ENCODE measurements at regions of chr2 and their contacts with region 1.

Region 1: GRCh38 chr2:135052042-135052876 is at the start of gene RAB3GAP1:
- DNase-seq: peak; percentile 85
- H3K4me3 Mint-ChIP-seq: peak within 1 kb of the TSS; percentile 95
- H3K27ac Mint-ChIP-seq: peak within 1 kb of the TSS; percentile 100
- H3K4me1 Mint-ChIP-seq: peaks cover 16% of the 10 kb centered on the region
- H3K27me3 Mint-ChIP-seq: no peaks in the 10 kb centered on the region
- CTCF ChIP-seq: no peak
- total RNA-seq, gene RAB3GAP1: 63.4 and 70.1 TPM in 2 replicates

Region 2: DNA sequence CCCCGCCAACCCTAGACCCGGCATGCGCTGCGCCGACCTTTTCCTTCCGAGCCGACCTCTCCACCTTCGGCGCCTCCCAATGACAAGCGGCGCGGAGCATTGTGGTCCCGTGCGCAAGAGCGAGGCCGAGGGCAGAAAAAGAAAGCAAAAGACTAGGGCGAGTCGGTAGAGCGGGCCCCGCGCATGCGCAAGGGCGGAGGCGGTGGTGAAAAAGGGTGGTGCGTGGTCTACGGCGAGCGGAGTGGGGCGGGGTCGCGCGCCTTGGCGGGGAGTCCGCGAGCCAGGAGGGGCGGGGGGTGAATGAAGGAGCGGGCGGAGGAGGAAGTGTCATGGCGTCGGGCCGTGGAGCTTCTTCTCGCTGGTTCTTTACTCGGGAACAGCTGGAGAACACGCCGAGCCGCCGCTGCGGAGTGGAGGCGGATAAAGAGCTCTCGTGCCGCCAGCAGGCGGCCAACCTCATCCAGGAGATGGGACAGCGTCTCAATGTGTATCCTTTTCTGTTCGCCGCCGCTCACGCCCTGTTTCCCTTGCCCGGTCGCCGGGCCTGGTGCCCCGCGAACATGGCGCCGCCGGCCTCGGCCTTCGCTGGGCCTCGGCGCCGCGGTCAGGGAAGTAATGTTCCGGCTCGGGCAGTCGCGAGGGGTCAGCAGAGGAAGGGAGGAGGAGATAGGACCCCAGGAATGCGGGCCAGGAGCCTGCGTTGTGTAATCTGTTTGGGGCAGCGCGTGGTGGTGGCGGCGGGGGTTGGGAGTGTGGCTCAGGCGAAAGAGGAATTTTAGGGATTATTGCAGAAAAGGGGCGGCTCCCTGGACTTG is 133.5 kb before region 1 on chr2 and contains the start of gene CCNT2:
- CTCF ChIA-PET with region 1: no interaction called
- POLR2A ChIA-PET with region 1: interaction called, 12 read pairs
- intact Hi-C with region 1: no loop called
- DNase-seq: peak; percentile 99
- H3K4me3 Mint-ChIP-seq: peak within 1 kb of the TSS; percentile 100
- H3K27ac Mint-ChIP-seq: peak within 1 kb of the TSS; percentile 100
- H3K4me1 Mint-ChIP-seq: peaks cover 12% of the 10 kb centered on the region
- H3K27me3 Mint-ChIP-seq: no peaks in the 10 kb centered on the region
- CTCF ChIP-seq: no peak
- total RNA-seq, gene CCNT2: 38.8 and 39.3 TPM in 2 replicates

Region 3: GRCh38 chr2:135030826-135031225 is 21.4 kb before region 1 on chr2:
- CTCF ChIA-PET with region 1: no interaction called
- POLR2A ChIA-PET with region 1: interaction called, 10 read pairs
- intact Hi-C with region 1: no loop called
- DNase-seq: peak; percentile 53
- H3K4me3 Mint-ChIP-seq: no peak overlapping the region
- H3K27ac Mint-ChIP-seq: no peak overlapping the region
- H3K4me1 Mint-ChIP-seq: no peaks in the 10 kb centered on the region
- H3K27me3 Mint-ChIP-seq: peaks cover 22% of the 10 kb centered on the region
- CTCF ChIP-seq: no peak

Region 4: DNA sequence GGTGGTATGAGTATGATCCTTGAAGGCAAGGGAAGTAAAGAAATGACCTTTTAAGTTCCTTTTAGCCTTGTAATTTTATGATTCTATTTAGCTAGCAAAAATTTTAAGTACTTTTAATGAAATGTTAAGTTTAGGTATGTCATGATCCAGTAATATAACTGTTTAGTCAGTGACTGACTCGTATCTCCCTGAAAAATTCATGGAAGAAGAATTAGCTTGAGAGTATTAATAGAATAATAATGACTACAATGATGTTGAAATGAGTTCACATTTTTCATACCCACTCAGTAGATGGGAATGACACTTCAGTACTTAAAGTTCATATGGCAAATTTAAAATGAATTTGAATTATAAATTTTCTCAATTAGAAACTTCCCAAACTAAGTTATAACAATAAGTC is 14.5 kb after region 1 on chr2:
- CTCF ChIA-PET with region 1: interaction called, 4 read pairs
- POLR2A ChIA-PET with region 1: interaction called, 10 read pairs
- intact Hi-C with region 1: no loop called
- DNase-seq: no peak
- H3K4me3 Mint-ChIP-seq: no peak overlapping the region
- H3K27ac Mint-ChIP-seq: no peak overlapping the region
- H3K4me1 Mint-ChIP-seq: peaks cover 6% of the 10 kb centered on the region
- H3K27me3 Mint-ChIP-seq: no peaks in the 10 kb centered on the region
- CTCF ChIP-seq: no peak

Region 5: GRCh38 chr2:135124924-135125886 is 72.9 kb after region 1 on chr2:
- CTCF ChIA-PET with region 1: no interaction called
- POLR2A ChIA-PET with region 1: interaction called, 4 read pairs
- intact Hi-C with region 1: loop called (anchors 10 kb)
- DNase-seq: peak; percentile 68
- H3K4me3 Mint-ChIP-seq: no peak overlapping the region
- H3K27ac Mint-ChIP-seq: peak overlapping the region; percentile 83
- H3K4me1 Mint-ChIP-seq: peaks cover 9% of the 10 kb centered on the region
- H3K27me3 Mint-ChIP-seq: no peaks in the 10 kb centered on the region
- CTCF ChIP-seq: no peak

Region 6: DNA sequence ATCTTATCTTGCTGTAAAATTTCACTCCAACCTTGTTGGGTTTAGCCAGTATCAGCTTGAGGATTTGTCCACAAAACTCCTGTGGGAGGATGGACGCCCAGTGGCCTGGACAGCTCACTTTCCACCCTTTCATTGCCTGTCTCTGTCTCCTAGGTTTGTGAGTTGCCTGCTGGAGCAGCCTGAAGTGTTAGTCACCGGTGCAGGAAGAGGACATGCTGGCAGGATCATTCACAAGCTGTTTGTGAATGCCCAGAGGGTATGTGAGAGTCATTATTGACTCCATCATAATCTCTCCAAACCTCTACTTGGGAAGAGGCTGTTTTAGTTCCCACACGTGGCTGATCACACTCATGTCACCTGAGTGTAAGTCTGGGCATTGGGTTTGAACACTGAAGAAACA is 112.2 kb after region 1 on chr2:
- CTCF ChIA-PET with region 1: no interaction called
- POLR2A ChIA-PET with region 1: interaction called, 3 read pairs
- intact Hi-C with region 1: loop called (anchors 10 kb)
- DNase-seq: peak; percentile 75
- H3K4me3 Mint-ChIP-seq: no peak overlapping the region
- H3K27ac Mint-ChIP-seq: no peak overlapping the region
- H3K4me1 Mint-ChIP-seq: peaks cover 6% of the 10 kb centered on the region
- H3K27me3 Mint-ChIP-seq: no peaks in the 10 kb centered on the region
- CTCF ChIP-seq: no peak

Measured in MCF 10A (cell line).